GM10248 (cell line): ENCODE measurements at regions of chr2 and their contacts with region 1.

Region 1: GRCh38 chr2:170324640-170325046 is 146.7 kb downstream of the MYO3B start:
- DNase-seq: peak; percentile 43
- CTCF ChIP-seq: peak; percentile 69

Region 2: DNA sequence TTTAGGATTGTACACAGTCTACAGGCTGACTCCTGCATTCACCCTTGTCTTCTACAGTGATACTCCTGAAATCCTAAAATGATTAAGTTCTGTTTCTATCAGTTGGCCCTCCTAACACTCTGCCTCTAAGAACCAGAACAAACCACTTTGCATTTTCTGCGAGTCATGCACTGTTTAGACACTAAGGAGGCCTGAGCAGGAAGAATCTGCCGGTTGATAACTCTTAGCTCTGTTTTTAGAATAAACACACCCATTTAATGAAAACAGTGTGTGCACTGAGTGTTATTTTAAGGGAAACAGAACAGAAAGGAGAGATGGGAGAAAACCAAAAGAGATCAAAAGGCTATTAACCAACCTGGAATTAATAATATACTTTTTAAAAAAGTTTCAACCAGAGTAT is 548.9 kb before region 1 on chr2:
- CTCF ChIA-PET with region 1: no interaction called
- POLR2A ChIA-PET with region 1: no interaction called
- DNase-seq: no peak
- CTCF ChIP-seq: no peak

Region 3: DNA sequence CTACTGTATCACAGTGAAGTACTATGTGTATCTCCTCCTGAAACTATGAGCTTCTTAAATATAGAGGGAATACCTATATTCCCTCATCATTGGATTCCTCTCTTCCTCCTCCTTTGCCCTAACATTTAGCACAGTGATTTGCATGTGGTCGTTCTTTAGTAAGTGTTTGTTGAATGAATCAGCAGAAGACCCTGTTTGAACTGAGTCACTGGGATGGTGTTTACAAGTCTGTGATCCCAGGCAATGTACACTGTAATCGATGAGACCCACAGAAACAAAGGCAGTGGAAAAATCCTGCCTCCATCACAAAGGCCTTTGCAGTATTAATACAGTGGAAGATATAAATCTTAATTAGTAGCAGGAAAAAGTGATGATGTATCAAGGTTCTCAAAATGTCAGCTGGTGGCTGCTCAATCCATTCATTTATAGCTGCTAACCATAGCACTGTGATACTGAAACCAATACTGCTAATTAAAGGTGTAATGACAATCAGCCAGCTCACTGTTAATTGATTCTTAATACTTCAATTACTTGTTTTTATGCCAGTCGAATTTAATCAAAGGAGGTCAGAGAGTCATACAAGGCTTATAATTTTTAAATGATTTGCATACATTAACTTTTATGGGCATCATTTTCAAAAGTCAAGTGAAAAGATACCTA is 167.5 kb before region 1 on chr2:
- CTCF ChIA-PET with region 1: no interaction called
- POLR2A ChIA-PET with region 1: no interaction called
- DNase-seq: no peak
- CTCF ChIP-seq: no peak

Region 4: GRCh38 chr2:170282851-170283250 is 41.8 kb before region 1 on chr2:
- CTCF ChIA-PET with region 1: no interaction called
- POLR2A ChIA-PET with region 1: no interaction called
- DNase-seq: no peak
- CTCF ChIP-seq: no peak

Region 5: DNA sequence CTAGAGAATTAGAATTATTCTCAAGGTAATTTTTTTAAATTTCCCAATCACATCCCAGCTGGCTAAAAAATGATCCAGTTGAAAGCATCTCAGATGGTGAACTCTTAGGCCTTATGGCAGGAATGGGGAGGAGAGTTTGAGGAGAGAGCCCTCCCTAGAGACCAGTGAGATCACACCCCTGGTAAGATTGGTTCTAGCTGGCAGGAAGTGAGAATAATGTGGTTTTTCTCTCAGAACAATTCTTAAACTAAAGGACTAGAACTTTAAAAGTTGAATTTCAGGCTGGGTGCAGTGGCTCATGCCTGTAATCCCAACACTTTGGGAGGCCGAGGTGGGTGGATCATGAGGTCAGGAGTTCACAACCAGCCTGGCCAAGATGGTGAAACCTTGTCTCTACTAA is 26.5 kb before region 1 on chr2:
- CTCF ChIA-PET with region 1: interaction called, 10 read pairs
- POLR2A ChIA-PET with region 1: no interaction called
- DNase-seq: peak; percentile 29
- CTCF ChIP-seq: no peak

Region 6: GRCh38 chr2:170815746-170816503 is 491.3 kb after region 1 on chr2:
- CTCF ChIA-PET with region 1: interaction called, 19 read pairs
- POLR2A ChIA-PET with region 1: no interaction called
- DNase-seq: peak; percentile 80
- CTCF ChIP-seq: peak; percentile 70